Motor neuron (in vitro differentiated cells): ENCODE measurements at regions of chr19 and their contacts with region 1.

Region 1: GRCh38 chr19:30719189-30719998 is 347.2 kb downstream of the ZNF536 start:
- ATAC-seq: peak; percentile 89 to 96 (median 92)
- H3K4me3 ChIP-seq: peak overlapping the region in 3 of 5 donors; percentile 1 to 27 (median 21)
- H3K27ac ChIP-seq: peak overlapping the region in 1 of 2 donors; percentile 28
- H3K4me1 ChIP-seq: peaks cover 27 to 30% of the 10 kb centered on the region in 2 donors

Region 2: DNA sequence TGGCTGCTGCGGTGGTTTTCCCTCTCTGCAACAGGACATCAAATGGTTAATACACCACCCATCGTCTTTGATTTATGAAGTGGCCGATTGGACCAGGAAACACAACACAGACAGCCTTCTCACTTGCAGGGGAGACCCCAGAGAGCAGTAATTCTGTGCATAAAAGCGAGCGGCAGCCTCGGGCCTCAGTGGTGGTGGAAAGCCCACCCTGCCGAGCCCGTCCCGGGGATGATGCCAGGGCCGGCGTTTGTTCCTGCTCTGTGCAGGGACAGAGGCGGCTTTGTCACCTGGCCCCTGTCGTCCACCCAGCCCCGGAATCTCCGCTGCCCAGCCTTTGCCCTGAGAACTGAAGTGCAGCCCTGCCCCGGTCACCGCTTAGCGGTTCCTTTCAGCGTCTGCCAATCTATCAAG is 445.4 kb after region 1 on chr19:
- in situ Hi-C with region 1: no loop called
- ATAC-seq: peak in 5 of 8 experiments; percentile 76 to 85 (median 78)
- H3K4me3 ChIP-seq: peak overlapping the region in 3 of 5 donors; percentile 9 to 13 (median 10)
- H3K27ac ChIP-seq: peak overlapping the region; percentile 64 to 76
- H3K4me1 ChIP-seq: peaks cover 46 to 48% of the 10 kb centered on the region in 2 donors

Region 3: DNA sequence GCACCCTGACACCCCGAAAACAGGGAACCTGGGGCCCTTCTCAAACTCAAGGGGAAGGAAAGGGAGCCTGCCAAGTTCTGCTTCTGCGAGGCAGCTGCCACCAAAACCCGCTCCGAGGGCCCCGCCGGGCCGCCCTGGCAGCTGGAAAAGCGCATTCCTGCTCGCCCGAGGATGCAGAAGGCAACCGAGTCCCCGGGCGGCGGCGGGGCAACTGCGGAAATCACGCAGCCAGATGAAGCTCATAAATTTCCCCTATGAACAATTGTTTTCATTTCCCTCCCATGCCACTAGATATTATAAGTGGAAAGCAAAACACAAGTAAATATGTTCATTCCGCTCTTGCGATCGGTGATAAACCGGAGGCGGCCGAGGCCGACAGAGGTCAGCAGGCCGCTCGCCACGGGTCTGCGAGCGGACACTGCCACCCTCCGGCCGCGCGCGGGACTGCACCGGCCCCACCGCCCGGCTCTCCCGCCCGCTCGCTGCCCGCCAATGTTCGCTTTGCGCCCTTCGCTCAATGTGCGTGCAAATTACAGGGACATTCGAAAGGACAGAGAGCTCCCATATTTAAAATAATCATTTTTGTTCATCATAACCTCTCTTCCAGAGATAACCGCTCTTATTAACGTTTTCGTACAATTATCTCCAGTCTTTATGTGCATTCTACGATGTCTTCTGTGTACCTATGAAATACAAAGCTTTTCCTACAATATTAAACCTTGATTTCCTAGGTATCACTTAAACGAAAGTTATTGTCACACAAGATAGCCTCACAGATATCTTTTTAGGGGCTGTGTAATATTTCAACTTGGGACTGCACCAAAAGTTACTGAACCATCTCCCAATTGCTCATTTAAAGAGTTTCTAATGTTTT is 1505.2 kb after region 1 on chr19:
- in situ Hi-C with region 1: loop called in 1 of 9 experiments (anchors 25 kb)
- ATAC-seq: peak; percentile 84 to 92 (median 92)
- H3K4me3 ChIP-seq: no peak overlapping the region
- H3K27ac ChIP-seq: no peak overlapping the region
- H3K4me1 ChIP-seq: peaks cover 12 to 13% of the 10 kb centered on the region in 2 donors